ENCODE measurements at regions of chr10 and their contacts with region 1.

Region 1: GRCh38 chr10:35635576-35635975 is 6.5 kb downstream of the FZD8 start:
- DNase-seq: peak; percentile 100
- ATAC-seq: peak; percentile 21
- H3K4me3 ChIP-seq: peak overlapping the region; percentile 69
- H3K27ac ChIP-seq: peak overlapping the region; percentile 71
- H3K4me1 ChIP-seq: peaks cover 63% of the 10 kb centered on the region
- H3K27me3 ChIP-seq: no peaks in the 10 kb centered on the region
- CTCF ChIP-seq: peak; percentile 100

Region 2: GRCh38 chr10:35470260-35470918 is 165.2 kb before region 1 on chr10:
- CTCF ChIA-PET with region 1: no interaction called
- POLR2A ChIA-PET with region 1: no interaction called
- intact Hi-C with region 1: no loop called
- DNase-seq: no peak
- ATAC-seq: no peak
- H3K4me3 ChIP-seq: no peak overlapping the region
- H3K27ac ChIP-seq: no peak overlapping the region
- H3K4me1 ChIP-seq: no peaks in the 10 kb centered on the region
- H3K27me3 ChIP-seq: no peaks in the 10 kb centered on the region
- CTCF ChIP-seq: no peak

Region 3: DNA sequence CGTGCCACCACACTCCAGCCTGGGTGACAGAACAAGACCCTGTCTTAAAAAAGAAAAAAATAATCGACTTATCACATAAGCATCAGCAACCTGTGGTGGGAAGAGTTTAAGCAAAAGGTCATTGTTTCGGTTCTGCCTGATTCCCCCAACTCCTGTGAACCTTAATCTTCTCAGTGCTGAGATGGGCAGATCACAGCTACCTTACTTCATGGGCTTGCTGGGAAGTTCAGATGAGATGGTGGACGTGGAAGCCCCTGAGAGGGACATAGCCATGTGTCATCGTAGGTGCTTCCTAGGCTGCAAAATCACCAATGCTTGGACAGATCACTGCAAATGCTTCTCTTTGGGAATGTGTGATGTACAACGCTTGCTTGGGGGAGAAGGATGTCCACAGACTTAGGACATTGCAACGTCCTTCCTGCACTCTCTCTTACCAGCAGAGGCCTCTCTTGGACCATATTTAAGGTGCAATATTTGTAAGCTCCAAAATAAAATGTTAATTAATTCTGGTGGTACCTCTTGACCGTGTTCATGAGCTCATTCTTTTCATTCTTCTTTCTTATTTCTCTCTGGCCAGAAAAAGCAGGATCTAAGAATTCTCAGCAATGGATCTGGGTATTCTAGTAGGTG is 21.9 kb before region 1 on chr10:
- CTCF ChIA-PET with region 1: interaction called, 83 read pairs
- POLR2A ChIA-PET with region 1: interaction called, 7 read pairs
- intact Hi-C with region 1: loop called (anchors 1 kb)
- DNase-seq: peak; percentile 92
- ATAC-seq: peak; percentile 96
- H3K4me3 ChIP-seq: no peak overlapping the region
- H3K27ac ChIP-seq: no peak overlapping the region
- H3K4me1 ChIP-seq: peaks cover 8% of the 10 kb centered on the region
- H3K27me3 ChIP-seq: no peaks in the 10 kb centered on the region
- CTCF ChIP-seq: peak; percentile 100

Region 4: DNA sequence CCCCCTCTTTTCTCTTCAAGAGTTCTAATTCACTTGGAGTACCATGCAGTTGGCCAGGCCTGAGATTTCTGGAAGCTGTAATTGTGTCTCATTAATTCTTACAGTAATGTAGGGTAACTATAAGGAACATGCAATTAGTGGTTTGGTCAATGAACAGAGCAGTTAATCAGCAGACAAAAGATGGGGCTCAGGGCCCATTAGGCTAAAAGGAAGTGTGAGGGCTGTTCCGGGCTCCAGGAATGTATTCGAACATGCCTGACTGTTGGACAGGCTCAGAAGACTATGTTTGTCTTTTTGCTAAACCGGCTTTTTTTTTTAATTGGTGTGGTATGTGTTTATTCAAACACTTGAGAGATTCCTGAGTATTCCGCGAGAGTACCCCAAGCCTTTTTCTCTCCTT is 49.0 kb after region 1 on chr10:
- CTCF ChIA-PET with region 1: no interaction called
- POLR2A ChIA-PET with region 1: no interaction called
- intact Hi-C with region 1: no loop called
- DNase-seq: no peak
- ATAC-seq: no peak
- H3K4me3 ChIP-seq: no peak overlapping the region
- H3K27ac ChIP-seq: no peak overlapping the region
- H3K4me1 ChIP-seq: peaks cover 11% of the 10 kb centered on the region
- H3K27me3 ChIP-seq: no peaks in the 10 kb centered on the region
- CTCF ChIP-seq: no peak

Region 5: DNA sequence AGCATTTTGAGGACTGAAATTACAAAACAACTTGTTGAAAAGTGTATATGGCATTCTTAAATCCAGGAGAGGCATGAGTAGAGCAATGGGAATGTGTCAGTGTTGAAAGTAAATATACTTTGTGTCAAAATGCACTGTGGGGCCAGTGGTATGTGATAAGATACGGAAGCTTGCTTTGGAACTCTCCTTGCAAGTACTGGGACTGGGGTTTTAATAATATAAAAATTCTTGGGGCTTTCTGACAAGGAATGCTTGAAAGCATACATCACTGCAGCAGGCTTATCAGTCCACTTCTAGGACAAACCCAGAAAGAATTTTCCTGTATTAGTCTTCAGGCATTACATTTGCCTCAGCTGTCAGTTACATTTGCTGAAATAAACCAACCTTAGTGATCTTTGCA is 479.3 kb after region 1 on chr10:
- CTCF ChIA-PET with region 1: interaction called, 12 read pairs
- POLR2A ChIA-PET with region 1: no interaction called
- intact Hi-C with region 1: no loop called
- DNase-seq: peak; percentile 90
- ATAC-seq: peak; percentile 96
- H3K4me3 ChIP-seq: no peak overlapping the region
- H3K27ac ChIP-seq: no peak overlapping the region
- H3K4me1 ChIP-seq: peaks cover 15% of the 10 kb centered on the region
- H3K27me3 ChIP-seq: no peaks in the 10 kb centered on the region
- CTCF ChIP-seq: no peak

Region 6: GRCh38 chr10:36324831-36325387 is 689.3 kb after region 1 on chr10:
- CTCF ChIA-PET with region 1: no interaction called
- POLR2A ChIA-PET with region 1: no interaction called
- intact Hi-C with region 1: loop called (anchors 2 kb)
- DNase-seq: peak; percentile 89
- ATAC-seq: peak; percentile 88
- H3K4me3 ChIP-seq: no peak overlapping the region
- H3K27ac ChIP-seq: peak overlapping the region; percentile 57
- H3K4me1 ChIP-seq: peaks cover 18% of the 10 kb centered on the region
- H3K27me3 ChIP-seq: no peaks in the 10 kb centered on the region
- CTCF ChIP-seq: no peak

Region 7: GRCh38 chr10:36578306-36578705 is 942.7 kb after region 1 on chr10:
- CTCF ChIA-PET with region 1: no interaction called
- POLR2A ChIA-PET with region 1: no interaction called
- intact Hi-C with region 1: loop called (anchors 1 kb)
- DNase-seq: peak; percentile 100
- ATAC-seq: peak; percentile 96
- H3K4me3 ChIP-seq: no peak overlapping the region
- H3K27ac ChIP-seq: peak overlapping the region; percentile 84
- H3K4me1 ChIP-seq: peaks cover 19% of the 10 kb centered on the region
- H3K27me3 ChIP-seq: no peaks in the 10 kb centered on the region
- CTCF ChIP-seq: no peak

Region 8: GRCh38 chr10:36676756-36677430 is 1041.3 kb after region 1 on chr10:
- CTCF ChIA-PET with region 1: no interaction called
- POLR2A ChIA-PET with region 1: interaction called, 3 read pairs
- intact Hi-C with region 1: loop called (anchors 2 kb)
- DNase-seq: peak; percentile 90
- ATAC-seq: peak; percentile 72
- H3K4me3 ChIP-seq: no peak overlapping the region
- H3K27ac ChIP-seq: peak overlapping the region; percentile 47
- H3K4me1 ChIP-seq: peaks cover 47% of the 10 kb centered on the region
- H3K27me3 ChIP-seq: no peaks in the 10 kb centered on the region
- CTCF ChIP-seq: no peak

Measured in PC-3 (cell line).